Cardiac septum (tissue), 1 donor: ENCODE measurements at regions of chr4 and their contacts with region 1.

Region 1: DNA sequence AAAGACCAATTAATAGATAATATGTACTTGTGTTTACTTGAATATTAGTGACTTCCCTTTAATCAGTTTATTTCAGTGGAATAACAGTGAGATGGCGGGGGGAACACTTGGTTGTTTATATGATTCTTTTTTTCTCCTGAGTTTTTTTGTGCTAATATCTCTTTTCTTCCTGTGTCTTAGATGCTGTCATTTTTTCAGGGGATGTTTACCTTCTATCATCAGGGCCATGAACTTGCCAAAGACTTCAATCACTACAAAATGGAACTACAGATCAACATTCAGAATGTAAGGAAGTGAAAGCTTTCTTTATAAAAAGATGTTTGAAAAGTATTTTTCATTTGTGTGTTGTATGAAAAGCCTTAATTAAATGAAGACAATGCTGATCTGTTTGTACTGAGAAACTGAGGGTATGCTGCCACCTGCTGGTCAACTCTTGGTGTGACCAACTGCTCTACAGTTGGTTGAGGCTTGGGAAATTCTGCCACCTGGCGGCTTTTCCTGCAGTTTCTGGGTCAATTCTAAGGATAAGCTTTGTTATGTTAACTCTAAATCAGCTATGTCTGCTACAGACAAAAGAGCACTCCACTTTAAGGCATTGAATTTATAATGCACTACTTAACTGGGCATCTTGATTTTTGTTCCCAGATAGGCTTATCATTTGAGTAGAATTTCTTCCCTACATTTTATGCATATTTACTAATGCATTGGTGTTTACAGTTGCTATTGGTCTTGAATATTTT is 134.8 kb downstream of the ARHGAP10 start:
- DNase-seq: peak; percentile 92

Region 2: GRCh38 chr4:147617173-147617840 is 249.4 kb before region 1 on chr4 and contains the start of gene TMEM184C:
- intact Hi-C with region 1: loop called (anchors 10 kb)
- DNase-seq: peak; percentile 99
- total RNA-seq, gene TMEM184C: 19.0 TPM

Region 3: GRCh38 chr4:147707865-147708672 is 158.6 kb before region 1 on chr4:
- intact Hi-C with region 1: loop called (anchors 1 kb)
- DNase-seq: no peak

Region 4: DNA sequence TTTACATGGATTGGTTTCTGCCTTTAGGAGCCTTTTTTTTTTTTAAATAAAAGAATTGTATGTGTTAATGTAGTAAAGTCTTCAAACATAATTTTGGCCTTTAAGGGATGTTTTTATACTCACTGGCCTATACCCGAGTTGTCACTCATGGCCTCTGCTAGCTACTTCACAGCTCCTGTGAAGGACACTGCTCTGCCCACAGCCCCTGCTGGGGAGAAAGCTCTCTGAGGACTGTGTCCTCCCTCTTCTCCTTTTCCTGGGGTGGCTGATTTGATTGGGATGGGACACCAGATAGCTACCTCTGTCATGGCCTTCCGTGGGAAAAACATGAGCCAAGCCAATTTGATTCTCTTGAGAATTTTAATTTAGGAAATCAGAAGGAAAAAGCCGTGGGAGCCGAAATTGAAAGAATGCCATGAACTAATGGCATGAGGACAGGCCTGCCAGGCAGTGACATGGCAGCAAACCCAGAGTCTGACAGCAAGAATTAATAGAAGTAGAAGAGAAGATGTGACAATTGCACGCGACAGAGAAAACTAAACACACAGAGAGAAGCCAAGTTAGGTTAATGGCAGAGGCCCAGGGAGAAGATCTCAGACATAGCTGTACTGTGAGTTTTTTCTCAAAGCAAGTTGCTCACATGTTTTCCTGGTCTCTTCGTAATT is 53.5 kb before region 1 on chr4:
- intact Hi-C with region 1: no loop called
- DNase-seq: no peak